ENCODE measurements at regions of chr17 and their contacts with region 1.

Region 1: DNA sequence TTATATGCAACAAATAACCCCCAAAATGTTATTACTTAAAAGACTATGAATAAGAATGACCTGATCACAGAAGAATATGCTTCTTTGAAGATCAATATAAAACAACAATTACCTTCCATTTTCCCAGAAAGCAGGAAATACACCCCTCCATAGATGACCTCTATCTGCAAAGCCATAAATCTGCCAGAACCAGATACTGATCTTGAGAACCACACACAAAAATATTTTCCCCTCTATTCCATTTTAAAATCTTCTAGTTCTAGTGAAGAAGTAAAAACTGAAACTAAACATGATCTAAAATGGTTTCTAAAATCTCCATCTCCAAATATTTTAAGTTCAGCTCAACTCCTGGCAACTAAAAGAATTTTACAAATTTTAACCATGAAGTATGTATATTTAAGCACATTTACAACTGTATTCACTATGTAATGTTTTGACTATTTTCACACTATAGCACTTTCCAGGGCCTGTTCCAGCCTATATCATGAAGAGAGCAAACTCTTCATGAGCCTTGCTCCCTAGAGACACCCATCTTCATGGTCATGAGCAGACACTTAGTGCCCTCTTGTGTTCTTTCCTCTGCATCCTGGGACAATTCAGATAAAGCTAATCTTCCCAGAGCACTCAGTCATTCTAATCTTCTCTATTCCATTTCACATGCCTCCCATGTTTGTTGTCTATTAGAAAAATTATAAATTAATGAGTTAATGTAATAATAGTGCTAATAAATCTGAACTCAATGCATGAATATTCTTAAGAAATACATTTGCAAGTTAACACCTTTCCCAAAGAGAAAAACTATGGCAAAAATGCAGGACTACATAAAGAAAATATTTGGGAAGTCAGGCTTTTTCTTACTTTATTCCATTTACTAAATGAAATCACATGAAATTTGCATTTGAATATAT is 87.0 kb downstream of the HELZ start:
- DNase-seq: peak; percentile 60
- ATAC-seq: peak; percentile 68
- H3K4me3 ChIP-seq: no peak overlapping the region
- H3K27ac ChIP-seq: no peak overlapping the region
- H3K4me1 ChIP-seq: peaks cover 15% of the 10 kb centered on the region; the same call in 1 of the 2 replicates
- H3K27me3 ChIP-seq: no peaks in the 10 kb centered on the region
- CTCF ChIP-seq: peak; percentile 74

Region 2: GRCh38 chr17:66915204-66916096 is 242.5 kb before region 1 on chr17:
- CTCF ChIA-PET with region 1: no interaction called
- POLR2A ChIA-PET with region 1: no interaction called
- intact Hi-C with region 1: loop called (anchors 1 kb)
- DNase-seq: peak; percentile 86
- ATAC-seq: peak; percentile 99
- H3K4me3 ChIP-seq: no peak overlapping the region
- H3K27ac ChIP-seq: no peak overlapping the region
- H3K4me1 ChIP-seq: peaks cover 4% of the 10 kb centered on the region; the same call in 1 of the 2 replicates
- H3K27me3 ChIP-seq: no peaks in the 10 kb centered on the region
- CTCF ChIP-seq: peak; percentile 88

Region 3: GRCh38 chr17:67042104-67042899 is 115.7 kb before region 1 on chr17:
- CTCF ChIA-PET with region 1: no interaction called
- POLR2A ChIA-PET with region 1: no interaction called
- intact Hi-C with region 1: no loop called
- DNase-seq: no peak
- ATAC-seq: no peak
- H3K4me3 ChIP-seq: no peak overlapping the region
- H3K27ac ChIP-seq: no peak overlapping the region
- H3K4me1 ChIP-seq: 0 out of 2 replicates have a peak, but pooled peaks cover 7% of the 10 kb centered on the region
- H3K27me3 ChIP-seq: peaks cover 2% of the 10 kb centered on the region; the same call in 1 of the 2 replicates
- CTCF ChIP-seq: no peak

Region 4: GRCh38 chr17:67116045-67116719 is 41.8 kb before region 1 on chr17:
- CTCF ChIA-PET with region 1: no interaction called
- POLR2A ChIA-PET with region 1: no interaction called
- intact Hi-C with region 1: loop called (anchors 1 kb)
- DNase-seq: peak; percentile 33
- ATAC-seq: no peak
- H3K4me3 ChIP-seq: no peak overlapping the region
- H3K27ac ChIP-seq: no peak overlapping the region
- H3K4me1 ChIP-seq: no peaks in the 10 kb centered on the region
- H3K27me3 ChIP-seq: no peaks in the 10 kb centered on the region
- CTCF ChIP-seq: peak; percentile 66; the same call in 1 of the 2 replicates

Region 5: DNA sequence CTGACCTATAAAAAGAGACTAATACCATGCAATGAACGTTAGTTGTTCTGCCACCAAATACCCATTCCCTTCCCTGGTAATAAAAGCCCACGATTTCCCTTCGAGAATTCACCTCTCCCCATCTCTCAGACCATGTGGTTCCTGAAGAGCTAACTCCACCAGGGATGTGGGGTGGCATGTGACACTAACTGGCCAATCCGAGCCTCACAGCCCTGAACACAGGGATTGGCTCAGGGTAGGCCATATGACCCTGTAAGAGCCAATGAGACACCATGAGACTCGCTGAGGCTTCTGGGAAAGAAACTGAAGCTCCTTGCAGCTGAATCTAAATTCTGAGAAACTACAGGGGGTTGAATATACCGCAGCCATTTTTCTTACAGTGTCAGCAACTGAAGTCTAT is 65.9 kb after region 1 on chr17:
- CTCF ChIA-PET with region 1: no interaction called
- POLR2A ChIA-PET with region 1: no interaction called
- intact Hi-C with region 1: no loop called
- DNase-seq: no peak
- ATAC-seq: no peak
- H3K4me3 ChIP-seq: no peak overlapping the region
- H3K27ac ChIP-seq: no peak overlapping the region
- H3K4me1 ChIP-seq: peaks cover 9% of the 10 kb centered on the region
- H3K27me3 ChIP-seq: no peaks in the 10 kb centered on the region
- CTCF ChIP-seq: no peak

Measured in PC-3 (cell line).